H1 (cell line): ENCODE measurements at regions of chrX and their contacts with region 1.

Region 1: DNA sequence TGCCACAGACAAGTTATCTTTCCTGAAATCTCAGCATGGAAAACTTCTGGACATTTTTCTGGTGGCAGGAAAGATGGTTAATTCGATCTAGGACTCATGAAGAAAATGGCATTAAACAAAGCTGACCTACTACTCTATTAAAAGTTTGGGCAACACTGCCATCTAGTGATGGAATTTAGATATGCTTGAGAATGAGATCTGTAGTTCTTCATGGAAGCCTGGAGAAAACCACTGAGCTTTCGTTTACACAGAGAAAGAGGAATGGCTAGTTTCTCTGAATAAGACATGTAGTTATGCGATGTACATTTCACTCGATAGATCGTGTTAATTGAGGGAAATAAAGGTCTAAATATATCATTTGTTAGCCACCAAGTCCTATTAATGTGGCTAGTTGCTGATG is 51.7 kb upstream of the CHRDL1 start:
- DNase-seq: no peak
- H3K4me3 ChIP-seq: no peak overlapping the region
- H3K27ac ChIP-seq: no peak overlapping the region
- H3K4me1 ChIP-seq: no peaks in the 10 kb centered on the region
- H3K27me3 ChIP-seq: no peaks in the 10 kb centered on the region
- CTCF ChIP-seq: peak in 2 of 3 experiments; percentile 26 to 35; a peak in 2 of 4 replicates
- EP300 ChIP-seq: no peak
- POLR2A ChIP-seq: no peak
- RAD21 ChIP-seq: peak; percentile 65 to 67

Region 2: GRCh38 chrX:110444996-110445395 is 402.3 kb before region 1 on chrX:
- CTCF ChIA-PET with region 1: interaction called, 66 read pairs
- POLR2A ChIA-PET with region 1: no interaction called
- DNase-seq: no peak
- H3K4me3 ChIP-seq: no peak overlapping the region
- H3K27ac ChIP-seq: no peak overlapping the region
- H3K4me1 ChIP-seq: peaks cover 0 to 6% (median under 1%) of the 10 kb centered on the region in 4 experiments; a peak in 4 of 7 replicates
- H3K27me3 ChIP-seq: no peaks in the 10 kb centered on the region; a peak in 1 of 7 replicates
- CTCF ChIP-seq: no peak
- EP300 ChIP-seq: no peak
- POLR2A ChIP-seq: no peak
- RAD21 ChIP-seq: no peak

Region 3: GRCh38 chrX:110450050-110450449 is 397.3 kb before region 1 on chrX:
- CTCF ChIA-PET with region 1: interaction called, 66 read pairs
- POLR2A ChIA-PET with region 1: no interaction called
- DNase-seq: peak; percentile 25 to 80
- H3K4me3 ChIP-seq: no peak overlapping the region
- H3K27ac ChIP-seq: no peak overlapping the region
- H3K4me1 ChIP-seq: peaks cover 0 to 6% (median under 1%) of the 10 kb centered on the region in 4 experiments; a peak in 4 of 7 replicates
- H3K27me3 ChIP-seq: no peaks in the 10 kb centered on the region
- CTCF ChIP-seq: peak; percentile 63 to 77 (median 77)
- EP300 ChIP-seq: no peak
- POLR2A ChIP-seq: no peak
- RAD21 ChIP-seq: peak; percentile 90 to 93

Region 4: DNA sequence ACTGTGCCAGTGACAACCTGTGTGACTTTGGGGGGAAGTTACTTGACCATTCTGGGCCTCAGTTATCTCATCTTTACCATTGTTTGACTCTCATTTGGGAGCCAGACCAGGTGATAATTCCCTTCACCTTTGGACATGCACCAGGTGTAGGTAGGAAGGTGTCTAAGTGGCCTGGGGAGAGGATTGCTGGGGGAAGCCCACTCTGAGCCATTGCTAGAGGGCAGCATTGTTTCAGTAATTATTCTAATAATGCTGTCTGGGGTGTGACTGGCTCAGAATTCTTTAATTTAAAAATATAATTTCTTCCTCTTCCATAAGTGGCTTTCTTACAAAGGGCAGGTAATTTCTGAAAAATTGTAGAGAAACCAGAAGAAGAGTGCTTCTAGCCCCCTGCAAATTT is 384.4 kb before region 1 on chrX:
- CTCF ChIA-PET with region 1: interaction called, 13 read pairs
- POLR2A ChIA-PET with region 1: no interaction called
- DNase-seq: no peak
- H3K4me3 ChIP-seq: no peak overlapping the region
- H3K27ac ChIP-seq: no peak overlapping the region
- H3K4me1 ChIP-seq: no peaks in the 10 kb centered on the region
- H3K27me3 ChIP-seq: no peaks in the 10 kb centered on the region
- CTCF ChIP-seq: peak; percentile 21 to 41 (median 33); a peak in 3 of 4 replicates
- EP300 ChIP-seq: no peak
- POLR2A ChIP-seq: no peak
- RAD21 ChIP-seq: peak; percentile 58 to 69

Region 5: GRCh38 chrX:110678593-110678992 is 168.7 kb before region 1 on chrX:
- CTCF ChIA-PET with region 1: interaction called, 12 read pairs
- POLR2A ChIA-PET with region 1: no interaction called
- DNase-seq: no peak
- H3K4me3 ChIP-seq: no peak overlapping the region
- H3K27ac ChIP-seq: no peak overlapping the region
- H3K4me1 ChIP-seq: peaks cover 0 to under 1% (median 0%) of the 10 kb centered on the region in 4 experiments; a peak in 1 of 7 replicates
- H3K27me3 ChIP-seq: no peaks in the 10 kb centered on the region
- CTCF ChIP-seq: peak in 1 of 3 experiments; percentile 45; a peak in 2 of 4 replicates
- EP300 ChIP-seq: no peak
- POLR2A ChIP-seq: no peak
- RAD21 ChIP-seq: peak; percentile 65 to 72

Region 6: GRCh38 chrX:110836982-110837381 is 10.4 kb before region 1 on chrX:
- CTCF ChIA-PET with region 1: interaction called, 17 read pairs
- POLR2A ChIA-PET with region 1: no interaction called
- DNase-seq: no peak
- H3K4me3 ChIP-seq: no peak overlapping the region
- H3K27ac ChIP-seq: no peak overlapping the region
- H3K4me1 ChIP-seq: no peaks in the 10 kb centered on the region
- H3K27me3 ChIP-seq: no peaks in the 10 kb centered on the region
- CTCF ChIP-seq: peak in 2 of 3 experiments; percentile 43 to 64; a peak in 3 of 4 replicates
- EP300 ChIP-seq: no peak
- POLR2A ChIP-seq: no peak
- RAD21 ChIP-seq: peak; percentile 45 to 58; a peak in 3 of 4 replicates